PC-3 (cell line): ENCODE measurements at regions of chr1 and their contacts with region 1.

Region 1: DNA sequence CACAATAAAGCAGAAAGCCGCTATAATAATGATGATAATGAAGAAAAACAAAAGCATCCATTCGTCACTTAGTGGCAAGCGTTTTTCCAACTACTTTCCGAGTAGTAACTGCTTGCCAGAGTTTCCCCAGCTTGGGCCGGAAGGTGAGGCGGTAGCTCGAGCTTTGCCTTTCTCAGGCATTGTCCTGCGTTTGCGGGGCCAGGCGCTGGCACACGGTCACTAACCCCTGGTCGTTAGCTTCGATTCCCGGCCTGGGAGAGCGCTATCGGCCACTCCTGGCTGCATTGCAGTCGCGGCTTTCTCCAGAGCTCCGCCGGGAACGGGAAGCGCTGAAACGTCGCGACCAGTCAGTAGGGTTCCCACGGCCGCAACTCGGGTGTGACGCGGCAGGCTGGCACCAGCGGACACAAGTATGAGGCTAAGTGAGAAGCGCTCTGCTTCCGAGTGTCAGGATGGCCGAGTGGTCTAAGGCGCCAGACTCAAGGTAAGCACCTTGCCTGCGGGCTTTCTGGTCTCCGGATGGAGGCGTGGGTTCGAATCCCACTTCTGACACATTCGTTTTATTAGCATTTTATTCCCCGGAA is 14.6 kb upstream of the ZNF692 start:
- DNase-seq: peak; percentile 100
- ATAC-seq: peak; percentile 84
- H3K4me3 ChIP-seq: peak overlapping the region; percentile 75
- H3K27ac ChIP-seq: peak overlapping the region; percentile 47
- H3K4me1 ChIP-seq: peaks cover 9% of the 10 kb centered on the region; the same call in 1 of the 2 replicates
- H3K27me3 ChIP-seq: no peaks in the 10 kb centered on the region
- CTCF ChIP-seq: 0 out of 2 replicates have a peak, but pooled peaks have one; percentile 26

Region 2: DNA sequence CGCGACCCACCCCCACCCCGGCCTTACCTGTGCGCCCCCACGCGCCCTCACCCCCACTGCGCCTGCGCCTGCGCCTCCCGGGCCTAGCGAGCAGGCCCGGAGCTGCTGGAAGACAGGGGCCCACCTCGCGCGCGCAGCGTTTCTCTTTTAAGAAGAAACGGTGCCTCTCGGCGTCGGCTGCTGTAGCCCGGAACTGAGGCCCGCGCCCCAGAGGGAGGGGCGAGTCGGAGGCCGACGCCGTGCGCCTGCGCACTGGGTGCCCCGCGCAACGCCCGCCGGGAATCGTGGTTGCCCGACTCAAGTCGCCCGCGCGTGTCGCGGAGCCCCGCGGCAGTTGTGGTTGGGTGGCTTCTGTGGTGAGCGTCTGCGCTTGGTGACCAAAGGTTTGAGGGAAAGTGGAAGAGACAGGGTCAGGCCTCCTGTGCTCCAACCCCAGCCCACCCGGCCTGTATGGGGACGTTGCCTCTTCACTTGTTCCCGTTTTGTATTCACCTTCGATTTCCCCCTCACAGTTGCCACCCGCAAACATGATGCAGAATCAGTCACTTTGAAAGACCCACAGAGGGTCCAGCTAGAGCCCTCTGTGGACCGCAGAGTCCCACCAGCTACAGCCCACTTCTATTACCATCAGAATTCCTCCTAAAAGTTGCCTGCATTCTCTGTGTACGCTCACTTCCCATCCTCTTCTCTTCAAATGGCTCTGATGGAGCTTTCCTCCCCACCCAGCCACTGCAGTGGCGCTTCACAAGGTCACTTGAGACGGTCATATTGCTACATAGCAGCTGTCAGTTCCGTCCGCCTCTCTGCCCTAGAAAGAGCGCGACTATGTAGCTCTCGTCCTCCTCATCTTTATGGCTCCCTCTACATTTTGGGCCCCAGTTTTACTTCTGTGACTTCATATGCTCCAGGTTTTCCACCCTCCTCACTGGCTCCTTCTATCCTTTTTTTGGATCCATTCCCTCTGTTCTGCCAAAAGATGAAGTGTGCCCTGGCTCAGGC is 14.3 kb before region 1 on chr1 and contains the start of gene ZNF692:
- CTCF ChIA-PET with region 1: interaction called, 6 read pairs
- POLR2A ChIA-PET with region 1: interaction called, 3 read pairs
- intact Hi-C with region 1: loop called (anchors 1 kb)
- DNase-seq: peak; percentile 100
- ATAC-seq: peak; percentile 78
- H3K4me3 ChIP-seq: peak within 1 kb of the TSS; percentile 75
- H3K27ac ChIP-seq: peak within 1 kb of the TSS; percentile 58
- H3K4me1 ChIP-seq: peaks cover 37% of the 10 kb centered on the region
- H3K27me3 ChIP-seq: no peaks in the 10 kb centered on the region
- CTCF ChIP-seq: no peak
- total RNA-seq, gene ZNF692: 71.9 and 85.4 TPM in 2 replicates